BJ (cell line): ENCODE measurements at regions of chr5 and their contacts with region 1.

Region 1: DNA sequence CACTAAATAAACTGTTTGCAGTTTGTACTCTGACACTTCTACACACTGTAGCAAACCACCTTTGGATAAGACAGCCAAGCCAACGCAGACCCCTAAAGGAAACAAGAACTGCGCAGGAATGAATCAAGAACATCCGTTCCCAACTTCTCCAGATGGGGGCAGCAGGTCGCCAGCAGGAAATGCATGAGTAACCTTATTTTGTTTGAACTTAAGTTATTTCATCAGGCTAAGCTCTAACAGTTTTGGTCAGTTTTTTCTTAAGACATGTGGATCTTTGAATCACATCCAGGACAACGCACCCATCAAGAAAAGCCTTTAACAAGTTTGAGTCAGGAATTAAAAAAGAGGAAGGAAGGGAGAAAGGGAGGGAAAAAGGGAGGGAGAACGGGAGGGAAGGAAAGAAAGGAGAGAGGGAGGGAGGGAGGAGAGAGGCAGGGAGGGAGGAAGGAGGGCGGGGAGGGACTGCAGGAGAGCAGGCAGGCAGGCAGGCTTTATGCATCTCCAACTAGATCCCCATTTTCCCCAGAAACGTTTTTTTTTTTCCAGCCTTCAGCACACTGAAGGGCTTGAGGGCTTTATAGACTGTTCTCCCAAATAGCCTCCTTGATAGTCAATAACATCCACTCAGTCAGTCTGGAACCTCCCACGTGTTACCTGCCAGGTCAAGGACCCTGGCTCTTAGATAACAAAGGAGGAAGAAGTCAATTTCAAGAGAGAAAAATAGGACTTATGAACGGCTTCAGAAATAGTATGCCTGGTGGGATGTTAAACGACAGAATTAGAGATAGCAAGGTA is 22.2 kb downstream of the BHMT start:
- DNase-seq: peak; percentile 66
- H3K4me3 ChIP-seq: peak overlapping the region; percentile 34
- H3K27me3 ChIP-seq: no peaks in the 10 kb centered on the region
- CTCF ChIP-seq: peak; percentile 85

Region 2: GRCh38 chr5:78984439-78985115 is 149.3 kb before region 1 on chr5:
- CTCF ChIA-PET with region 1: interaction called, 14 read pairs
- POLR2A ChIA-PET with region 1: interaction called, 14 read pairs
- DNase-seq: peak; percentile 44
- H3K4me3 ChIP-seq: peak overlapping the region; percentile 72
- H3K27me3 ChIP-seq: no peaks in the 10 kb centered on the region
- CTCF ChIP-seq: peak; percentile 59

Region 3: DNA sequence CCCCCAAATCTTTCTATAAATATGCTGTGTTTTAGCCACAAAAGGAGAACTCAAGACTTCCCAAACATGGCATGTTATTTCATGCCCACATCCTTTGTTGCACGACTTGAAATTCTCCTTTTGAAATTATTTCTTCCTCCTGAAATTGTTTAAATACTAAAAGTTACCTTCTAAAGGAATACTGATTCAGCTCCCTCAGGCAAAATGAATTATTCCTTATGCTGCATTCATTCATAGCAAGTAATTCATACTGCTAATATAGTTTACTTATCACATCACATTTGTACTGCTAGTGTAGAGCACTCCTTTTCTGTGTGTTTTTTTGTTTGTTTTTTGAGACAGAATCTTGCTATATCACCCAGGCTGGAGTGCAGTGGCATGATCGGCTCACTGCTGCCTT is 23.5 kb after region 1 on chr5:
- CTCF ChIA-PET with region 1: interaction called, 10 read pairs
- POLR2A ChIA-PET with region 1: no interaction called
- DNase-seq: no peak
- H3K4me3 ChIP-seq: no peak overlapping the region
- H3K27me3 ChIP-seq: no peaks in the 10 kb centered on the region
- CTCF ChIP-seq: no peak

Region 4: DNA sequence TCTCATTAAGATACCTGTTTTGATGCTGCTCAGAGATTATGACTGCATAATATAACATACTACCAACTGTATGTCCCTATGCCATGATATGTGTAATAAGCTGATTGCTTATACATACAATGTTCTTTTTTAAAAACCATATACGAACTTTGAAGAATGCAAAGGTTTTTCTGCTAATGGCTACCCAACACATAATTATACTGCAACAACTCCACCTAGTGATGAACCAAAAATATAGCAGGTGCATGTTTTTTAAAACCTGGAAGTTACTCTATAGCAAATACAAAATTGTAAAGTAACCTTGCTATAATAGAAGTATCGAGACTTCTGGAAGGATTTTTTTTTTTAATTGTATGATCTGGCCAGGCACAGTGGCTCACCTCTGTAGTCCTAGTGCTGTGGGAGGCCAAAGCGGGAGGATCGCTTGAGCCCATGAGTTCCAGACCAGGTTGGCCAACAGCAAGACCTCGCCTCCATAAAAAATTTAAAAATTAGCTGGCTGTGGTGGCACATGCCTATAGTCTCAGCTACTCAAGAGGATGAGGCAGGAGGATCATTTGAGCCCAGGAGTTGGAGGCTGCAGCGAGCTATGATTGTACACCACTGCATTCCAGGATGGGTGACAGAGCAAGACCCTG is 331.0 kb after region 1 on chr5:
- CTCF ChIA-PET with region 1: interaction called, 152 read pairs
- POLR2A ChIA-PET with region 1: no interaction called
- DNase-seq: no peak
- H3K4me3 ChIP-seq: no peak overlapping the region
- H3K27me3 ChIP-seq: no peaks in the 10 kb centered on the region
- CTCF ChIP-seq: peak; percentile 55